Activated naive CD4-positive, alpha-beta T cell treated with anti-CD3 and anti-CD28 coated beads, Interleukin-2, amount 10 ng/mL, durations not matched to agents 7 days and 5 days (primary cell): ENCODE measurements at regions of chr7 and their contacts with region 1.

Region 1: DNA sequence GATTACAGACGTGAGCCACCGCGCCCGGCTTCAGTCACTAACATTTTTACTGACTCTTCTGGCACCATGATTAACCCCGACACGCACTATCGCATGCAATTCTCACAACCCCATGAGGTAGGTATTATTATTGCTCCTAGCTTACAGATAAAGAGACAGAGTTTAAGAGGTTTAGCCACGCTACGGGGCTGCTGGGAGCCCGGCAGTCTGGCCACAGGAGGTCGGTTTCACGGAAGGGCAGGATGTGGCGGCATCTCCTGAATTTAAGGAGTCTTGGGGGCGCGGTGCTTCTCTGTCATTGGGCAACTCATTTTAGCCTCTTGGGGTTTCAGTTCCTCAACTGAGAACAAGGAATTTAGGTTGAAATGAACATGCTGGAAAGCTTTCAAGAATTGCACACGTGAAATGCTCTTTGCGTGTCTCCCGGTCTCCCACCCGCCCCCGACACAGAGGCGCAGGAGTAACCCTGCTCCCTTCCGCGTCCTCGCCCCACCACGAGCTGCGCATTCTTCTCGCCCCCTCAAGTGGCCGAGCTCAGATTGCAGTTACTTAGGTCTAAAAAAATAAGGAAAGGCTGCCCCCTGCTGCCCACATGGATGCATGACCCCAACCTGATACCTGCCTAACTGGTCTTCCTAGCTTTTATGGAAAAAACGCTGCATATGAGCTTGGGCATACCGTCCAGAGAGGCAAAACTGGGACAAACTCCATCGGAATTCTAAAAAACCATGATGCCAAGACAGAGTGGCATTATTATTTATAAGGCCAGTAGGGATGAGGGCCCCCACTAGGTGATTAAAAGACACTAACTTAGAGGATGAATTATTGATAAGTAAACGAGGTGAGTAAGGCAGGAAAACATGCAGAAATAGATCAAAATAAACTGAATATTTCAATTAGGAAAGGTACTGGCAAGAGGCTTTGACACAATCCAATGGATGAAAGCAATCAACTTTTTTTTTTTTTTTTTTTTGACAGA is 12.4 kb downstream of the PRSS2 start:
- DNase-seq: peak; percentile 86
- H3K4me3 Mint-ChIP-seq: peak overlapping the region; percentile 75
- H3K27ac Mint-ChIP-seq: peak overlapping the region; percentile 100
- H3K4me1 Mint-ChIP-seq: peaks cover 22% of the 10 kb centered on the region
- H3K27me3 Mint-ChIP-seq: no peaks in the 10 kb centered on the region

Region 2: GRCh38 chr7:142632291-142633134 is 150.7 kb before region 1 on chr7:
- CTCF ChIA-PET with region 1: interaction called, 72 read pairs
- DNase-seq: peak; percentile 61
- H3K4me3 Mint-ChIP-seq: no peak overlapping the region
- H3K27ac Mint-ChIP-seq: peak overlapping the region; percentile 24
- H3K4me1 Mint-ChIP-seq: peaks cover 20% of the 10 kb centered on the region
- H3K27me3 Mint-ChIP-seq: peaks cover 8% of the 10 kb centered on the region

Region 3: GRCh38 chr7:142669074-142669654 is 114.0 kb before region 1 on chr7:
- CTCF ChIA-PET with region 1: interaction called, 66 read pairs
- DNase-seq: no peak
- H3K4me3 Mint-ChIP-seq: no peak overlapping the region
- H3K27ac Mint-ChIP-seq: no peak overlapping the region
- H3K4me1 Mint-ChIP-seq: peaks cover 36% of the 10 kb centered on the region
- H3K27me3 Mint-ChIP-seq: no peaks in the 10 kb centered on the region

Region 4: DNA sequence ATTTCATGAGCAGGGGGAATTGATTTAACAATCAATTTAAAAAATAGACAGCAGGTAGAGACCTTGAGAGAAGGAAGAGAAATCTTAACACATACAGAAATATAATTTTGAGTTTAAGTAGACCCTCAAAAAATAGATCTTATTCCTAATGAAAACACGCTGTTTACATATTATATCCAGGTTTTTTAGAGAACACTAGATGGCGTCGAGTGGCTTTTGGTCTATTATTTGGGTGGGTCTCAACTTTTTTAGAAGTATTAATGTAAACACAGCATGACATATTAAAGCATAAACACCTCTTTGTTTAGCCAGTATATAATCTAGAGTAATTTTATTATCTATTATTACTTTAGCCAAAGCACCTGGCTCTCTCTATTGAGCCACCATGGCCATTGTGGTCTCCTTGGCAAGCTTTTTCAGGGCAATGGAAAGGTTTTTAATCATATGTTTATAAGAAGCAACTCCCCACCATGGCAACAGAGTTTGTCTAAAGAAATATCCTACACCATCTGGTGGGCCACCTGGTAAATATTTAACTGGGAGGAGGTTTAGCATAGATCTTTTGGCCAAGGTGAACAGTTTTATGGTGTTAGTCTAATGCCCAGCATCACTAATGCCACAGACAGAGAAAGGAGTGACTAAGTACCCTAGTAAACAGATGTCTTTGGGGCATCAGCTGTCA is 93.6 kb before region 1 on chr7:
- CTCF ChIA-PET with region 1: interaction called, 14 read pairs
- DNase-seq: no peak
- H3K4me3 Mint-ChIP-seq: no peak overlapping the region
- H3K27ac Mint-ChIP-seq: peak overlapping the region; percentile 74
- H3K4me1 Mint-ChIP-seq: peaks cover 41% of the 10 kb centered on the region
- H3K27me3 Mint-ChIP-seq: no peaks in the 10 kb centered on the region

Region 5: DNA sequence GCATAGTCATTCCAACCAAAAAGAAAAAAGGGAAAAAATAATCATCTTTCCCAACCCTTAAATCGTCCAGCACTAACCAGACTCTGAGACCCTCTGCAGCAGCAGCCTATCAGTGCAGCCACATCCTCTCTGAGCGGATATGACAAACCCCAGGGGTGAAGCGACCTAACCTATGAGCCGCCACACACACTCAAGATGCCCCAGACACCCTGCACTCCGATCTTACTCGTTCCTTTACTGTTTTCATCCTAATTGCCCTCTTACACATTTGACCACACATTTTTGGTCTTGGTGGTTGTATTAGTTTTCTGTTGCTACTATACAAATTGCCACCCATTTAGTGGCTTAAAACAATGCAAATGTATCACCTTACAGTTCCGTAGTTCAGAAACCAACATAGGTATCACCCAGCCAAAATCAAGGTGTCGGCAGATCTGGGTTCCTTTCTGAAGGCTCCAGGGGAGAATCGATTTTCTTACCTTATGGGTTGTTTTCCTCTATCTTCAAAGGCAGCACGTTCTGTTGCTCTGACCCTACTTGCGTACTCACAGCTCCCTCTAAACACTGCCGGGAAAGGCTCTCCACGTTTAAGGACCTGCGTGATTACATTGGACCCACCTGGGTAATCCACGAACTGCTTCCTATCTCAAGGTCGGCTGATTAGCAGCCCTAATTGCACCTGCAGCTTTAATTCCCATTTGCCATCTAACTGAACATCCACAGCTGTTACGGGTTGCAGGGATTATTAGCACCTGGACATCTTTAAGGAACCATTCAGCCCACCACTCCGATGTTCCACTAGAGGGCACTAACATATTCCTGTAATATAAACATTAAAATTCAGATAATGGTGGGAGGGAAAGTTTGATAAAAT is 71.2 kb before region 1 on chr7:
- CTCF ChIA-PET with region 1: interaction called, 27 read pairs
- DNase-seq: peak; percentile 42
- H3K4me3 Mint-ChIP-seq: peak overlapping the region; percentile 78
- H3K27ac Mint-ChIP-seq: peak overlapping the region; percentile 91
- H3K4me1 Mint-ChIP-seq: peaks cover 80% of the 10 kb centered on the region
- H3K27me3 Mint-ChIP-seq: no peaks in the 10 kb centered on the region

Region 6: DNA sequence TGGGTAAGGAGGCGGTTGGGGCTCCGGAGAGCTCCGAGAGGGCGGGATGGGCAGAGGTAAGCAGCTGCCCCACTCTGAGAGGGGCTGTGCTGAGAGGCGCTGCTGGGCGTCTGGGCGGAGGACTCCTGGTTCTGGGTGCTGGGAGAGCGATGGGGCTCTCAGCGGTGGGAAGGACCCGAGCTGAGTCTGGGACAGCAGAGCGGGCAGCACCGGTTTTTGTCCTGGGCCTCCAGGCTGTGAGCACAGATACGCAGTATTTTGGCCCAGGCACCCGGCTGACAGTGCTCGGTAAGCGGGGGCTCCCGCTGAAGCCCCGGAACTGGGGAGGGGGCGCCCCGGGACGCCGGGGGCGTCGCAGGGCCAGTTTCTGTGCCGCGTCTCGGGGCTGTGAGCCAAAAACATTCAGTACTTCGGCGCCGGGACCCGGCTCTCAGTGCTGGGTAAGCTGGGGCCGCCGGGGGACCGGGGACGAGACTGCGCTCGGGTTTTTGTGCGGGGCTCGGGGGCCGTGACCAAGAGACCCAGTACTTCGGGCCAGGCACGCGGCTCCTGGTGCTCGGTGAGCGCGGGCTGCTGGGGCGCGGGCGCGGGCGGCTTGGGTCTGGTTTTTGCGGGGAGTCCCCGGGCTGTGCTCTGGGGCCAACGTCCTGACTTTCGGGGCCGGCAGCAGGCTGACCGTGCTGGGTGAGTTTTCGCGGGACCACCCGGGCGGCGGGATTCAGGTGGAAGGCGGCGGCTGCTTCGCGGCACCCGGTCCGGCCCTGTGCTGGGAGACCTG is 13.6 kb after region 1 on chr7:
- CTCF ChIA-PET with region 1: interaction called, 20 read pairs
- DNase-seq: peak; percentile 42
- H3K4me3 Mint-ChIP-seq: peak overlapping the region; percentile 92
- H3K27ac Mint-ChIP-seq: peak overlapping the region; percentile 100
- H3K4me1 Mint-ChIP-seq: peaks cover 66% of the 10 kb centered on the region
- H3K27me3 Mint-ChIP-seq: peaks cover 10% of the 10 kb centered on the region